Activated CD4-positive, alpha-beta memory T cell treated with anti-CD3 and anti-CD28 coated beads for 36 hours (primary cell): ENCODE measurements at regions of chr16 and their contacts with region 1.

Region 1: DNA sequence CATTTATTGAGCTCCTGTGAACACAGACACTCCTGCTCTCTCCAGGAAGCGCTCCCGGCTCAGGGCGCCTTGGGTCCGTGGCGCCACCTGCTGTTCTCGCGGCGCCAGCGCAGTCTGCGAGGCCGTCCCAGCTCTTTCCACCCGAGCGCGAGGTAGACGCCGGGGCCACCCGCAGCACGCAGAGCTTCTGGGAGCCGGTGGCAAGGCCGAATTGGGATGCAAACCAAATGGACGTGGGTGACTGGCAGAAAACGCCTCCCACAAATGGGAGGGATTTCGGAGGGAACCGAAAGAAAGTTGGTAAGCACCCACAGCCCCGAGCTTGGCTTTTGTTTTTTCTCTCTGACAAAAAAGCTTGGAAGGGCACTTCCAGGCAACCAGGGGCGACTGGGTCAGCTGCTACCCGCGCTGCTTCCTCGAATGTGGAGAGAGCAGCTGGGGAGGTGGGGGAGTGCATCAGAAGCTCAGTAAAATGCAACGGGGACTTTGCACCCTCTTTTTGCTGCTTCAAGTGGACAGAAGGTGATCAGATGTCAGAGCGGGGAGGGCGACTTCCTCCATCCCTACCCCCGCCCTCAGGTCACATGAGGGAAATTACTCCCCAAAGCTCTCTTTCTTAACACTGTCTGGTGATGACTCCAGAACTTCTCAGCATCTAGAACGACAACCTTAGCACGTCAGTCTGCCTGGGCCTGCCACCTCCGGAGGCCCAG is 13.5 kb upstream of the N4BP1 start:
- DNase-seq: peak; percentile 89
- H3K4me3 Mint-ChIP-seq: peak overlapping the region; percentile 71
- H3K27ac Mint-ChIP-seq: peak overlapping the region; percentile 45
- H3K4me1 Mint-ChIP-seq: peaks cover 15% of the 10 kb centered on the region
- H3K27me3 Mint-ChIP-seq: peaks cover 3% of the 10 kb centered on the region

Region 2: GRCh38 chr16:48231727-48232492 is 391.6 kb before region 1 on chr16:
- CTCF ChIA-PET with region 1: interaction called, 3 read pairs
- POLR2A ChIA-PET with region 1: no interaction called
- intact Hi-C with region 1: loop called (anchors 2 kb)
- DNase-seq: peak; percentile 70
- H3K4me3 Mint-ChIP-seq: peak overlapping the region; percentile 6
- H3K27ac Mint-ChIP-seq: peak overlapping the region; percentile 58
- H3K4me1 Mint-ChIP-seq: peaks cover 20% of the 10 kb centered on the region
- H3K27me3 Mint-ChIP-seq: no peaks in the 10 kb centered on the region

Region 3: DNA sequence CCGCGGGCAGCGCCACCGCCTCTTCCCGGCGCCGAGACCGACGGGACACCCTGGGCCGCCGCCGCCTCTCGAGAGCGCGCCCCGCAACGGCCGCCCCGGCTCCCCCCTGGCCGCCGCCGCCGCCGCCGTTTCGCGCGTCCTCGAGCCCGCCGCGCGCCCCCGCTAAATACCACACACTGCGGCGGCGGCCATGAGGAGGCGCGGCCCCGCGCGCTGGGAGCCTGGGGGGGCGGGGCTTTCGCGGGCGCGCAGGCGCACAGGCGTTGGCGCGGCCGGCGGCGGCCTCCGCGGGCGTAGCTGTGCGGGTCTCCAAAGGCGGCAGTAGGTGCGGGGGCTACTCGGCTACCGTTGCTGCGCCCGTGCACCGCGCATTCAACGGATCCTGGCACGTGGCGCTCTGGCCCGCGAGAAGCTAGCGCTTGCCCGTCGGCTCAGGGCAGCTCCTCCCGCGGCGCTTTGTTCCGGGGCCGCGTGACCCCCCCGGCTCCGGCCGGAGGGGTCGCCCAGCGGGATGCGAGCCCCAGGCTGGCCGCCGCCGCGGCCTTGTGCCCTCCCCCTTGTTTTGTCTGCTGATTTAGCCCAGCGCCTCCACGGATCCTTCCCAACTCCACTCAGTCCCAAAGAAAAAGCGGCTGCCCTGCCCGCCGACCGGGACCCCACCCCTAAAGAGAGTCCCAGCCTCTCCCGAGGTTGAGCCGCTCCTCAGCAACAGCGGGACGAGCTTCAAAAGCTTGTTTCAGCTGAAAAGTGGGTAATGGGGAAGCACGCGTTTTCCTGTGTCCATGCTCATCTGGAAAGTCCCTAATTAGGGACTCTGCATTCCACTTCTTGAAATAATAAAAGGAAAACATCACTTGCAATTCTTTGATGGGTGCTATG is 237.9 kb before region 1 on chr16 and contains the start of gene SIAH1:
- CTCF ChIA-PET with region 1: interaction called, 22 read pairs
- POLR2A ChIA-PET with region 1: interaction called, 6 read pairs
- intact Hi-C with region 1: no loop called
- DNase-seq: peak; percentile 88
- H3K4me3 Mint-ChIP-seq: peak within 1 kb of the TSS; percentile 92
- H3K27ac Mint-ChIP-seq: peak within 1 kb of the TSS; percentile 86
- H3K4me1 Mint-ChIP-seq: peaks cover 18% of the 10 kb centered on the region
- H3K27me3 Mint-ChIP-seq: no peaks in the 10 kb centered on the region
- total RNA-seq, gene SIAH1: 13.0 to 13.8 TPM

Region 4: GRCh38 chr16:48526058-48526957 is 97.2 kb before region 1 on chr16:
- CTCF ChIA-PET with region 1: interaction called, 31 read pairs
- POLR2A ChIA-PET with region 1: no interaction called
- intact Hi-C with region 1: no loop called
- DNase-seq: peak; percentile 65
- H3K4me3 Mint-ChIP-seq: no peak overlapping the region
- H3K27ac Mint-ChIP-seq: no peak overlapping the region
- H3K4me1 Mint-ChIP-seq: no peaks in the 10 kb centered on the region
- H3K27me3 Mint-ChIP-seq: no peaks in the 10 kb centered on the region

Region 5: DNA sequence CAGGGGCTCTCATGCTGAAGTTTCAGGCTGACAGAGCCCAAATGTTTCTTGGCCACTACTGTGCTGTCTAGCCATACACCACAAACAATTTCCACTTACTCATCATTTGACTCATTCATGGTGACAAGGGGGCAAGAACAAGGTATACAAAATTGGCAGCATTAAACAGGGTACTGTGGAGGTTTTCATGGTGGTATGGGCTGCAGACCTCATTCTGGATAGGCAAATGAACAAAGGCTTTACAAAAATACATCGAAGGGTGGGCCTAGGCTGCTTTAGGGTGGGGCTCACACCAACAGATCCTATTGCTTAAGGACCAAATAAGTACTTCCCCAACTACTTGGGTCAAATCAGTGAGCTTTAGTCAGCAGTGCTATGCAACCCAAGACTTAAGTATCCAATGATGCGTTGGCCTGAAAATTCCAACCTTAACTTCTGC is 66.5 kb before region 1 on chr16:
- CTCF ChIA-PET with region 1: interaction called, 36 read pairs
- POLR2A ChIA-PET with region 1: no interaction called
- intact Hi-C with region 1: no loop called
- DNase-seq: peak; percentile 52
- H3K4me3 Mint-ChIP-seq: no peak overlapping the region
- H3K27ac Mint-ChIP-seq: peak overlapping the region; percentile 63
- H3K4me1 Mint-ChIP-seq: peaks cover 80% of the 10 kb centered on the region
- H3K27me3 Mint-ChIP-seq: no peaks in the 10 kb centered on the region

Region 6: DNA sequence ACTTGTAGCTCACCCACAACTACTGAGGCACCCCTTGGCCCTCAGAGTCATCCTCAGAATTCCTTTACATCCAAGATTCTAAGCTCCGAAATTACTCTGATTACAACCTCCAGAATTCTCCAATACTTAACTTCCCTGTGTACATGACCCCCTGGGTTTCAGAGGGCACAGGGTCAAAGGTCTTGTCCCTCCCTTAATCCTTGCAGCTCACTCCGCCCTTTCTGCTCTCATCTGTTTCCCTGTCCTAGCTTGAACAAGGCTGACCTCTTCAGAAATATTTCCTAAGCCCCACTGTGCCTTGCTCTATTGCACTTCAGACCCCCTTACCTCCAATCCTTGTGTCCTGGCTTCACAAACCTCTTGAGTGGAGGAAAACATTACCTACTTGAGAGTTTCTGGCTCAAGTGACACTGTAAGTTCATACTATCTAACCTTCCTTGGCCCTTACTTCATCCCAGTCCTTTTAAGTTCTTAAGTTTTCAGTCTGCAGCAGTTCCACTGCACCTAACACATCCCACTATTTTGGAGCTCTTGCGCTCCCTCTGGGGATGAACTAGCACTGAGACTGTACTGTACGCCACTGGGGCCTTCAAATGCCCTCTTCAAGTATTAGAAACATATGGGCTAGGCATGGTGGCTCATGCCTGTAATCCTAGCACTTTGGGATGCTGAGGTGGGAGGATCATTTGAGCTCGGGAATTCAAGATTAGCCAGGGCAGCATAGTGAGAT is 19.6 kb before region 1 on chr16:
- CTCF ChIA-PET with region 1: interaction called, 25 read pairs
- POLR2A ChIA-PET with region 1: interaction called, 9 read pairs
- intact Hi-C with region 1: no loop called
- DNase-seq: no peak
- H3K4me3 Mint-ChIP-seq: no peak overlapping the region
- H3K27ac Mint-ChIP-seq: peak overlapping the region; percentile 14
- H3K4me1 Mint-ChIP-seq: peaks cover 51% of the 10 kb centered on the region
- H3K27me3 Mint-ChIP-seq: no peaks in the 10 kb centered on the region